Psoas muscle (tissue), 8 donors: ENCODE measurements at regions of chr1 and their contacts with region 1.

Region 1: GRCh38 chr1:167704715-167705114 is 17.1 kb upstream of the MPZL1 start:
- DNase-seq: no peak
- ATAC-seq: no peak
- H3K4me3 ChIP-seq: no peak overlapping the region
- H3K27ac ChIP-seq: no peak overlapping the region
- H3K4me1 ChIP-seq: no peaks in the 10 kb centered on the region
- H3K27me3 ChIP-seq: no peaks in the 10 kb centered on the region
- CTCF ChIP-seq: no peak

Region 2: DNA sequence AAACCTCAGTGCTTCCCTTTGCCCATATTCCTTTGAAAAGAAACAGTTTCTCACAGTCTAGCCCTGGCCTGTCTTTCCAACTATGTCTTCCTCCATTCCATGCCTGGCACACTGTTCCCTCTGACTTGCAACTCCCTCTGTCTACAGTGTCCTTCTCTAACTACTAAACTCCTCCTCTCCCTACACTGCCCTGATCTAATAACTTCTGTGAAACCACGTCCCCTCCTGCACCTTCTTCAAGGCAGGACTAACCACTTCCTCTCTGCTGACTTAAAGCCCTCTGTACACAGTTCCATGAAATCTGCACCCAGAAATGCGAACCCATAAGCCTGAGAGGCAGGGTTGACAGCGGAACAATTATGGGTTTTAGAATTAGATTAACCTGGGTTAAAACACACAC is 1339.6 kb after region 1 on chr1:
- intact Hi-C with region 1: loop called in 1 of 2 experiments (anchors 5 kb)
- DNase-seq: no peak
- ATAC-seq: peak in 2 of 4 donors; percentile 21 to 23
- H3K4me3 ChIP-seq: no peak overlapping the region
- H3K27ac ChIP-seq: no peak overlapping the region
- H3K4me1 ChIP-seq: peaks cover 5% of the 10 kb centered on the region
- H3K27me3 ChIP-seq: no peaks in the 10 kb centered on the region
- CTCF ChIP-seq: no peak